ENCODE measurements at regions of chr5 and their contacts with region 1.

Region 1: DNA sequence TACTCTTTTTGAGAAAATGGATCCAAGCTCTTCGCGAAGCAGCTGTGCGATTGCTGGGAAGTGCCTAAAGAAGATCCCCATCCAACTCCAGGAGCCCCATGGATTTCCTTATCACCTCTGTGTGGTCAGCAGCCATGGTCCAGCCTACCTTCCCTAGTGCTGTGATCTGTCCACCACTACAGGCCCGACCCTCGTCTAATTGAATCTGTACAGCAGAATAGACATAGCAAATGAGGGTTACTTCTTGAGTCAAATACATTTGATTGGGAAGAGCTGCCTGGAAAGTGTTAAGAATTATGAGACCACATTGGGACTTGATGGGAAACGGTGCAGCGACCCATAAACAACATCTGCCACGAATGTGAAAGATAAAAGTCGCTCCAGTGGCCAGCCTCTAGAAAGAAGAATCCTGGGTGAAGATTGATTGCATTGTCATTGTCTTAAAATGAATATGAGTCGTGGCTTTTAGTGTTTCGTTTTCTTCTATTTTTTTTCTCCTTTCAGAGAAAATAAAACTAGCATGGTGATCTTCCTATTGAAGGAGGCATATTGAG is 118.4 kb downstream of the PAM start:
- H3K4me3 Mint-ChIP-seq: no peak overlapping the region
- H3K27ac Mint-ChIP-seq: no peak overlapping the region
- H3K4me1 Mint-ChIP-seq: no peaks in the 10 kb centered on the region
- H3K27me3 Mint-ChIP-seq: peaks cover 2% of the 10 kb centered on the region

Region 2: DNA sequence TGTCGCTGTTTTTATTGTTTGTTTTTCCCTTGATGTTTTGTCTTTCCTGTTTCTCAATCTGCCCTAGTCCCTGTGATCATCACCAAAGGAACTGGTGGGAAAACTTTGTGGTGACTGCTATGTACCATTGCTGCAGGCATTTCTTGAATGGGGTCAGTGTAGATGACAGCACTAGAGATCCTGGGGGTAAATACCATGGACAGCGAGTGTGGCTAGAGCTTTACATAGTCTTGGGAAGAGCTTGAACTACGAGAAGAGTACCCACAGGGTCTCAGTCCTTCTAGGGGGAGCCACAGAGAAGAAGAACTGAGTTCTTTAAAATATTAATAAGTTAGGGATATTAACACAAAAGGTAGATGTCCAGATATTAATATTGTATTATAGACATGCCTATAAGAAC is 20.5 kb after region 1 on chr5:
- intact Hi-C with region 1: no loop called
- H3K4me3 Mint-ChIP-seq: no peak overlapping the region
- H3K27ac Mint-ChIP-seq: no peak overlapping the region
- H3K4me1 Mint-ChIP-seq: no peaks in the 10 kb centered on the region
- H3K27me3 Mint-ChIP-seq: no peaks in the 10 kb centered on the region

Region 3: GRCh38 chr5:102916109-102916508 is 42.7 kb after region 1 on chr5:
- intact Hi-C with region 1: loop called (anchors 5 kb)
- H3K4me3 Mint-ChIP-seq: no peak overlapping the region
- H3K27ac Mint-ChIP-seq: no peak overlapping the region
- H3K4me1 Mint-ChIP-seq: no peaks in the 10 kb centered on the region
- H3K27me3 Mint-ChIP-seq: no peaks in the 10 kb centered on the region

Measured in dendritic cell treated with granulocyte-macrophage colony-stimulating factor and Interleukin-4, amounts not matched to agents 40 ng/mL and 50 ng/mL, for 4 days (primary cell).